B cell (primary cell): ENCODE measurements at regions of chr11 and their contacts with region 1.

Region 1: DNA sequence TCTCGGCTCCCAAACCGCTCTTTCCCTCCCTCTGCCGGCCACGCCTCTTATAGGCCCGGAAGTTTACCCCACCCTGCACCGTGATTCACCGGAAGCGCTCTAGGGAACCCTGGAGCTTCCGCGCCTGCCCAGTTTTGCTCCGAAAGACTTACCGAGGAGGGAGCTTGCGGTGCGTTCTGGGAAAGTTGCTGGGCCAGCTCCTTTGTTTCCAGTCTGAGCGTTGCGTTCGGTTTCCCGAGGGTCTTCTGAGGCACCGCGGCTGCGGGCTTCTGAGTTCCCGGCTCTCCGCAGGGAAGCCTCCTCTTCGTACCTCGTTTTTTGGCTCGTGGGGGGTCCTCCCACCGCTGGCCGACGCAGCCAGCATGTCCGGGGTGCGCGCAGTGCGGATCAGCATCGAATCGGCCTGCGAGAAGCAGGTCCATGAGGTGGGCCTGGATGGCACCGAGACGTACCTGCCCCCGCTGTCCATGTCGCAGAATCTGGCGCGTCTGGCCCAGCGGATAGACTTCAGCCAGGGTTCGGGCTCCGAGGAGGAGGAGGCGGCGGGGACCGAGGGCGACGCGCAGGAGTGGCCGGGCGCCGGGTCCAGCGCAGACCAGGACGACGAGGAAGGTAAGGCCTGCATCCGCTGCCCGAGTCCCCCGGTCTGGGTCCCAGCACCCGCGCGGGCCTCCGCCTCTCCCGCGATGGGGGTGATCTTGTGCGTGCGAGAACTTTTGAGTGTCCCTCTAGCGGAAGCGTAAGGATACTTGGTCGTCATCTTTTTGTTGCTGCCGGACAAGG is at the start of gene MED17:
- DNase-seq: peak; percentile 89
- ATAC-seq: peak; percentile 94
- H3K4me3 ChIP-seq: peak within 1 kb of the TSS; percentile 71 to 99 (median 85)
- H3K4me3 Mint-ChIP-seq: peak within 1 kb of the TSS; percentile 97
- H3K27ac ChIP-seq: peak within 1 kb of the TSS; percentile 82 to 91
- H3K27ac Mint-ChIP-seq: peak within 1 kb of the TSS; percentile 92
- H3K4me1 ChIP-seq: peaks cover 26 to 29% of the 10 kb centered on the region in 2 donors
- H3K4me1 Mint-ChIP-seq: peaks cover 40% of the 10 kb centered on the region
- H3K27me3 ChIP-seq: no peaks in the 10 kb centered on the region
- H3K27me3 Mint-ChIP-seq: no peaks in the 10 kb centered on the region
- CTCF ChIP-seq: peak; percentile 57
- total RNA-seq, gene MED17: 78.1 and 82.7 TPM in 2 replicates

Region 2: GRCh38 chr11:93197380-93198214 is 586.7 kb before region 1 on chr11 and contains the start of gene SLC36A4:
- CTCF ChIA-PET with region 1: no interaction called
- POLR2A ChIA-PET with region 1: no interaction called
- intact Hi-C with region 1: loop called (anchors 10 kb)
- DNase-seq: peak; percentile 94
- ATAC-seq: peak; percentile 85
- H3K4me3 ChIP-seq: peak within 1 kb of the TSS; percentile 67 to 99 (median 77)
- H3K4me3 Mint-ChIP-seq: peak within 1 kb of the TSS; percentile 96
- H3K27ac ChIP-seq: peak within 1 kb of the TSS; percentile 90 to 97
- H3K27ac Mint-ChIP-seq: peak within 1 kb of the TSS; percentile 96
- H3K4me1 ChIP-seq: peaks cover 7% of the 10 kb centered on the region in 2 donors
- H3K4me1 Mint-ChIP-seq: peaks cover 18% of the 10 kb centered on the region
- H3K27me3 ChIP-seq: peaks cover 0 to 7% (median 0%) of the 10 kb centered on the region in 4 experiments
- H3K27me3 Mint-ChIP-seq: peaks cover 10% of the 10 kb centered on the region
- CTCF ChIP-seq: no peak
- total RNA-seq, gene SLC36A4: 27.5 and 28.2 TPM in 2 replicates

Region 3: GRCh38 chr11:93234602-93235207 is 549.6 kb before region 1 on chr11:
- CTCF ChIA-PET with region 1: no interaction called
- POLR2A ChIA-PET with region 1: no interaction called
- intact Hi-C with region 1: loop called (anchors 10 kb)
- DNase-seq: peak; percentile 69
- ATAC-seq: peak; percentile 92
- H3K4me3 ChIP-seq: no peak overlapping the region
- H3K4me3 Mint-ChIP-seq: no peak overlapping the region
- H3K27ac ChIP-seq: no peak overlapping the region
- H3K27ac Mint-ChIP-seq: no peak overlapping the region
- H3K4me1 ChIP-seq: no peaks in the 10 kb centered on the region
- H3K4me1 Mint-ChIP-seq: no peaks in the 10 kb centered on the region
- H3K27me3 ChIP-seq: peaks cover 0 to 5% (median 2%) of the 10 kb centered on the region in 4 experiments
- H3K27me3 Mint-ChIP-seq: peaks cover 27% of the 10 kb centered on the region
- CTCF ChIP-seq: peak; percentile 87

Region 4: DNA sequence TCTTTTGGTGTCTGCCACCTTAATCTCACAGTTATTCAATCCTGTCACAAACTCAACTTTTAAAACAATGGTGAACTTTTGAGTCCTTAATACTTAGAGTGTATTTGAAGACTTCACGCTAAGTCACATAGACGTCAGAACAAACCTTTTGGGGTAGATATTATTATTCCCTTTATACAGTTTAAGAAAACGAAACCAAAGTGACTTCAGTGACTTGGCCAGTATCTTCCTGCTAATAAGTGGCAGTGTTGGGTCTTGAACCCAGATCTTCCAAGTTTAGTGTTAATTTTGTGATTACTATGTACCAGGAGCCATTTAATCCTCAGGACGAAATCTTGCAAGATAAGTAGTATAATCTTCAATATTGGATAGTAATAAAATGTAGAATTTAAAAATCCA is 122.2 kb before region 1 on chr11:
- CTCF ChIA-PET with region 1: interaction called, 3 read pairs
- POLR2A ChIA-PET with region 1: interaction called, 3 read pairs
- intact Hi-C with region 1: loop called (anchors 1 kb)
- DNase-seq: no peak
- ATAC-seq: no peak
- H3K4me3 ChIP-seq: peak overlapping the region; percentile 81 to 100 (median 97)
- H3K4me3 Mint-ChIP-seq: peak overlapping the region; percentile 85
- H3K27ac ChIP-seq: peak overlapping the region; percentile 87 to 91
- H3K27ac Mint-ChIP-seq: peak overlapping the region; percentile 77
- H3K4me1 ChIP-seq: peaks cover 7 to 16% of the 10 kb centered on the region in 2 donors
- H3K4me1 Mint-ChIP-seq: peaks cover 19% of the 10 kb centered on the region
- H3K27me3 ChIP-seq: no peaks in the 10 kb centered on the region
- H3K27me3 Mint-ChIP-seq: no peaks in the 10 kb centered on the region
- CTCF ChIP-seq: no peak

Region 5: GRCh38 chr11:93668171-93668570 is 116.2 kb before region 1 on chr11:
- CTCF ChIA-PET with region 1: no interaction called
- POLR2A ChIA-PET with region 1: no interaction called
- intact Hi-C with region 1: loop called (anchors 2 kb)
- DNase-seq: no peak
- ATAC-seq: no peak
- H3K4me3 ChIP-seq: no peak overlapping the region
- H3K4me3 Mint-ChIP-seq: no peak overlapping the region
- H3K27ac ChIP-seq: no peak overlapping the region
- H3K27ac Mint-ChIP-seq: no peak overlapping the region
- H3K4me1 ChIP-seq: no peaks in the 10 kb centered on the region
- H3K4me1 Mint-ChIP-seq: peaks cover 2% of the 10 kb centered on the region
- H3K27me3 ChIP-seq: no peaks in the 10 kb centered on the region
- H3K27me3 Mint-ChIP-seq: no peaks in the 10 kb centered on the region
- CTCF ChIP-seq: no peak

Region 6: GRCh38 chr11:93741094-93741881 is 43.1 kb before region 1 on chr11 and contains the starts of genes C11orf54 and TAF1D:
- CTCF ChIA-PET with region 1: interaction called, 43 read pairs
- POLR2A ChIA-PET with region 1: interaction called, 38 read pairs
- intact Hi-C with region 1: loop called (anchors 1 kb)
- DNase-seq: peak; percentile 99
- ATAC-seq: peak; percentile 95
- H3K4me3 ChIP-seq: peak within 1 kb of the TSS; percentile 73 to 98 (median 92)
- H3K4me3 Mint-ChIP-seq: peak within 1 kb of the TSS; percentile 98
- H3K27ac ChIP-seq: peak within 1 kb of the TSS; percentile 90 to 96
- H3K27ac Mint-ChIP-seq: peak within 1 kb of the TSS; percentile 98
- H3K4me1 ChIP-seq: peaks cover 36 to 39% of the 10 kb centered on the region in 2 donors
- H3K4me1 Mint-ChIP-seq: peaks cover 63% of the 10 kb centered on the region
- H3K27me3 ChIP-seq: no peaks in the 10 kb centered on the region
- H3K27me3 Mint-ChIP-seq: no peaks in the 10 kb centered on the region
- CTCF ChIP-seq: no peak
- total RNA-seq, gene C11orf54: 38.9 and 40.3 TPM in 2 replicates
- total RNA-seq, gene TAF1D: 230 and 235 TPM in 2 replicates

Region 7: GRCh38 chr11:93767018-93767417 is 17.3 kb before region 1 on chr11:
- CTCF ChIA-PET with region 1: no interaction called
- POLR2A ChIA-PET with region 1: no interaction called
- intact Hi-C with region 1: no loop called
- DNase-seq: no peak
- ATAC-seq: no peak
- H3K4me3 ChIP-seq: no peak overlapping the region
- H3K4me3 Mint-ChIP-seq: no peak overlapping the region
- H3K27ac ChIP-seq: no peak overlapping the region
- H3K27ac Mint-ChIP-seq: no peak overlapping the region
- H3K4me1 ChIP-seq: no peaks in the 10 kb centered on the region
- H3K4me1 Mint-ChIP-seq: no peaks in the 10 kb centered on the region
- H3K27me3 ChIP-seq: no peaks in the 10 kb centered on the region
- H3K27me3 Mint-ChIP-seq: no peaks in the 10 kb centered on the region
- CTCF ChIP-seq: no peak

Region 8: GRCh38 chr11:94128746-94129511 is 344.6 kb after region 1 on chr11 and contains the start of gene PANX1:
- CTCF ChIA-PET with region 1: no interaction called
- POLR2A ChIA-PET with region 1: interaction called, 5 read pairs
- intact Hi-C with region 1: loop called (anchors 1 kb)
- DNase-seq: peak; percentile 89
- ATAC-seq: peak; percentile 81
- H3K4me3 ChIP-seq: peak within 1 kb of the TSS; percentile 73 to 92 (median 89)
- H3K4me3 Mint-ChIP-seq: no peak within 1 kb of the TSS
- H3K27ac ChIP-seq: peak within 1 kb of the TSS; percentile 81 to 90
- H3K27ac Mint-ChIP-seq: peak within 1 kb of the TSS; percentile 91
- H3K4me1 ChIP-seq: peaks cover 25 to 46% of the 10 kb centered on the region in 2 donors
- H3K4me1 Mint-ChIP-seq: peaks cover 29% of the 10 kb centered on the region
- H3K27me3 ChIP-seq: no peaks in the 10 kb centered on the region
- H3K27me3 Mint-ChIP-seq: no peaks in the 10 kb centered on the region
- CTCF ChIP-seq: no peak
- total RNA-seq, gene PANX1: 10.3 and 10.7 TPM in 2 replicates